Posterior vena cava (tissue), 2 donors: ENCODE measurements at regions of chr17 and their contacts with region 1.

Region 1: DNA sequence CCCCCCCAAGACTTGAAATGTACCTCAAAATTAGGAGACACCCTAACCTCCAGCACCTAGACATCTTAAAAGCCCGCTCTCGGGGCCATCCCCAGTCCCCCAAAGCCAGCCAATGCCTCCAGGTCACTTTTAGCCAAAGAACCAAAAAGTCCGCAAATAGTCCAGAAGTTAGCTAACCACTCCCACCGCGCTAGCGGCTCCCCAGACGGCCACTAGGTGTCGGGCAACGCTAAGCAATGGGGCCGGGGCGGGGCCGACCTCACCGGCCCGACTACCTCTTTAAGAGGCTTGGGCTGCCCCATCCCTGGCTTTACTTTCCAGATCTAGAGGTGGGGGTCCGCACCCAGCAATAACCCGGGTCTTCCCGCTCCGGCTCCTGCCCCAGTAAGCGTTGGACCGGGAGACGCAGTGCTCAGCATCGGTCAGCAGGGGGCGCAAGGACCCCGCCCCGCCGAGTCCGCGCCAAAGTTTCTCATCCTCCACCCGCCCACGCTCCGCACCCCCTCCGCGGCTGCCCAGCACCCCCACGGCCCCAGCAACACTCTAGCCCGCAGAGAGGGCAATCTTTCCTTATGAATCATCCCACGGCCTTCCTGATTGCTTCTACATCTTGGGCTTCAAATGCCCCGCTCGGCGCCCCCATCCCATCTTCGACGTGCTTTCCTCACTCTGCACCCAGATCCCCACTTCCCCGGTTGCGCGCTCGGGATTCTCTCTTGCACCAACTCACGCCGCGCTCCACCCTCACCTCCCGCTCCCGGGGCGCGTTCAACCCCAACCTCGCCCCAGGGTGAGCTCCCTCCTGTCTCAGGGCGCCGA is 765 bp downstream of the COL1A1 start:
- DNase-seq: peak; percentile 98

Region 2: GRCh38 chr17:50149417-50150353 is 51.0 kb before region 1 on chr17:
- intact Hi-C with region 1: loop called in 1 of 2 experiments (anchors 1 kb)
- DNase-seq: peak; percentile 90

Region 3: GRCh38 chr17:50269477-50270434 is 69.1 kb after region 1 on chr17:
- intact Hi-C with region 1: loop called (anchors 2 kb)
- DNase-seq: peak; percentile 90